PC-3 (cell line): ENCODE measurements at regions of chr1 and their contacts with region 1.

Region 1: GRCh38 chr1:58579437-58579836 is 2.4 kb upstream of the TACSTD2 start:
- DNase-seq: no peak
- ATAC-seq: no peak
- H3K4me3 ChIP-seq: no peak overlapping the region
- H3K27ac ChIP-seq: no peak overlapping the region
- H3K4me1 ChIP-seq: peaks cover 35% of the 10 kb centered on the region
- H3K27me3 ChIP-seq: no peaks in the 10 kb centered on the region
- CTCF ChIP-seq: no peak

Region 2: DNA sequence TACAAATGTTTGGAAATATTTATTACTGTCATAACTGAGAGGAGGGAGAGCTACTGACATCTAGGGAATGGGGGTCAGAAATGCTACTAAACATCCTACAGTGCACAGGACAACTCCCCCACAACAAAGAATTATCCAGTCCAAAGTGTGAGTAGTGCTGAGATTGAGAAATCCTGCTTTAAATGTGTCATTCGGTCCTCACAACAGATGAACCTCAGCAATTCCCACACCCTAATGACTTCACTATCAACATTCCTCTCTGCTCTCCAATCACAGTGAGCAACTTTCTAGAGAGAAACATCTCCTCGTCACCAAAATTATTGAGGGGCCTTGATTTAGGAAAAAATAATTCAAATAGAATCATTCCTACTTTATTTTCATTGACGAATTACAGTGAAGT is 50.9 kb before region 1 on chr1:
- CTCF ChIA-PET with region 1: interaction called, 13 read pairs
- POLR2A ChIA-PET with region 1: no interaction called
- intact Hi-C with region 1: no loop called
- DNase-seq: peak; percentile 26
- ATAC-seq: no peak
- H3K4me3 ChIP-seq: no peak overlapping the region
- H3K27ac ChIP-seq: no peak overlapping the region
- H3K4me1 ChIP-seq: no peaks in the 10 kb centered on the region
- H3K27me3 ChIP-seq: no peaks in the 10 kb centered on the region
- CTCF ChIP-seq: no peak